Activated T-helper 2 cell treated with anti-CD3 and anti-CD28 coated beads, Interferon-gamma antibody, Interleukin-2, Interleukin-4, amounts not matched to agents 10 μg/mL and 5 μg/mL and 100 μg/mL, durations not matched to agents 14 hours and 24 hours and 36 hours (primary cell): ENCODE measurements at regions of chr17 and their contacts with region 1.

Region 1: DNA sequence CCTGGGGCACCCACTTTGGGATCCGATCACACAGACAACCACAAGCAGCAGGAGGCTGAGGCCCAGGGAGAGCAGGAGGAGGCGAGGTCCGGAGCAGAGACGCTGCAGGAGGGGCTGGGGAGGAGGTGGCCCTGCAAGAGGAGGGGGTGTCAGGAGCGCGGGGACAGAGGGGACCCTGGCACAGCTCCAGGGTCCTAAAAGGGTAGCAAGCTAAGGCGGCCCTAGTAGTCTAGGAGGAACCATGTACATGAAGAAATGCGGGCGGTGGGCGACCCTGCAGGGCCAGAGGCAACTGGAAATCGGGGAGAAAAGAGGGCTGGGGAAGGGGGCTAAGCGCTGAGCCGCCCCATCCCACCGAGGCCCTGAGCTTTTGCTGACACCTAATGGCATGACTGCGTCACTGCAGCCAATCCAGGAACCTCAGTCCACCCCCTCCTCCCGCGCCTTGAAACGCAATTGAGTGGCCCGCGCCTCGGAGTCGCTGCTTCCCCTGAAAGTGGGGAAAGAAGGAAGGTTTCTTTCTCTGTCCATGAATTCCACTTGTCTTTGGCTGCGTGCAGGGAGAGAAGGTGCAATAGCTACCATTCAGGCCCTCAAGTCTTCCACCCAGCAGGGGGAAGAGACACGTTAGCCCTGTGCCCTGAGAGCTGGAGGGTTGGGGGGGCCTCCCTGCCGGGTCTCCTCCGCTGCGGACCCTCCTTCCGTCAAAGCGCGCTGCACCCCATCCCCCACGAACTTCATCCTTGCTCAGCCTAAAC is 1.8 kb downstream of the ASGR1 start:
- DNase-seq: peak; percentile 54
- H3K4me3 Mint-ChIP-seq: peak overlapping the region; percentile 64
- H3K27ac Mint-ChIP-seq: no peak overlapping the region
- H3K4me1 Mint-ChIP-seq: peaks cover 9% of the 10 kb centered on the region
- H3K27me3 Mint-ChIP-seq: peaks cover 11% of the 10 kb centered on the region

Region 2: DNA sequence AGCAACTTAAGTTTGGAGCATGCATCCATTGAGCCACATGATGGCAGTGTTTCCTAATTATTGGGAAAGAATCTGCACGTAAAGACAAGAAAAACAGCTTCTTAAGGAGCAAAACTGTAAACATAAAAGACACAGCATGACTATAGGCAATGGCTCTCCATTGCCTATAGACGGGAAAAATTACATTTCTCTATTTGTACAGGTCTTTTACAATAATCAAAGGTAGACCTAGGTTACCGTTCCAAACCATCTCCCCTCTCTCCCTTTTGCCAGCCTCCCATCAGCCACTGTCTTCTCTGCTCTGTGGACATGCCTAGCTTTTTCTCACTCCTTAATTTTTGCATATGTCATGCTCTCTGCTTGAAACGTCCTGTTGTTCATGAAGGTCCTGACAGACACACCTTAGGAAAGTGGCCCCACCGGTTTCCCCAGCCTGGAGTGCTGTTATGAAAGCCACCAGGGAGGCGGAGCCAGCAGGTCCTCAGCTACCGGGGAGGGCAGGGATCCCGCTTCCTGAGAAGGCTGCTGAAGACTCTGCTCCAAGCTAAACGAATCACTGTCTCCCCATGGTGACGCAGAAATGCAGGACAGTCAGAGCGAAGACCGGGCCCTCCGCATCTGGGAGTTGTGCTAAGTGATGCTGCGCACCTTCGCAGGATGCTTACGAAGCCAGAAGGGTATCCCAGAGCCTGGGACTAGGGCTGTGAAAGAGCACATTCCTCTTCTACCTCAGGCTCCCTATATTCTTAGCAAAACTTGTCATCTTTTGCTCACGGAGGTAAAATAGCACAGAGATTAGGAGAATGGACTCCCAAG is 131.3 kb before region 1 on chr17:
- intact Hi-C with region 1: loop called (anchors 2 kb)
- DNase-seq: no peak
- H3K4me3 Mint-ChIP-seq: peak overlapping the region; percentile 75
- H3K27ac Mint-ChIP-seq: peak overlapping the region; percentile 68
- H3K4me1 Mint-ChIP-seq: peaks cover 21% of the 10 kb centered on the region
- H3K27me3 Mint-ChIP-seq: peaks cover 12% of the 10 kb centered on the region